Activated B cell treated with CpG ODN at 0.5 μM for 24 hours (primary cell): ENCODE measurements at regions of chr6 and their contacts with region 1.

Region 1: GRCh38 chr6:16761471-16762267 is 409 bp upstream of the ATXN1 start:
- DNase-seq: peak; percentile 72
- ATAC-seq: peak; percentile 59
- H3K4me3 Mint-ChIP-seq: peak overlapping the region; percentile 95
- H3K27ac Mint-ChIP-seq: peak overlapping the region; percentile 92
- H3K4me1 Mint-ChIP-seq: peaks cover 38% of the 10 kb centered on the region
- H3K27me3 Mint-ChIP-seq: no peaks in the 10 kb centered on the region
- CTCF ChIP-seq: no peak

Region 2: DNA sequence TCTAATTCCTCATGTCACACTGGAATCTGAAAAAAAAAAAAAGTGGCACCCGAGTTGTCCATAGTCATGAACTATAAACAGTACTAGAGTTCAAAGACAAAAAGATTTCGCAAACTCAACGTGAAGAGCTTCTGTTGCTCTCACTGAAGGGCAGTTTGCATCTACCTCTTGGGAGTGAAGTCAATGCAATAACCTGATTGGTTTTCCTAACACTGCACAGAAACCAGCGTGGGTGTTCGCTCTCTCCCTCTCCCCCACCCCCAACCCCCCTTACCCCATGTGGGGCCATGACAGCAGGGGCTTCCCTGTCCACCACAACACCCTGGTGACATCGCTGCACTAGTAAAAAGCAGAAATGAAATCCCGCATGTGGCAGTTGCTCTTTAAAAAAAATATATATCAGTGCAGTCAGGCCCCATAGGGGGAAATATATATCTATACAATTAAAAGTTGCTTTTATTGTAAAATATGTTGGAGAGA is 456.4 kb before region 1 on chr6:
- CTCF ChIA-PET with region 1: interaction called, 3 read pairs
- POLR2A ChIA-PET with region 1: interaction called, 6 read pairs
- intact Hi-C with region 1: loop called (anchors 1 kb)
- DNase-seq: peak; percentile 37
- ATAC-seq: peak; percentile 96
- H3K4me3 Mint-ChIP-seq: peak overlapping the region; percentile 82
- H3K27ac Mint-ChIP-seq: peak overlapping the region; percentile 65
- H3K4me1 Mint-ChIP-seq: peaks cover 36% of the 10 kb centered on the region
- H3K27me3 Mint-ChIP-seq: no peaks in the 10 kb centered on the region
- CTCF ChIP-seq: no peak

Region 3: DNA sequence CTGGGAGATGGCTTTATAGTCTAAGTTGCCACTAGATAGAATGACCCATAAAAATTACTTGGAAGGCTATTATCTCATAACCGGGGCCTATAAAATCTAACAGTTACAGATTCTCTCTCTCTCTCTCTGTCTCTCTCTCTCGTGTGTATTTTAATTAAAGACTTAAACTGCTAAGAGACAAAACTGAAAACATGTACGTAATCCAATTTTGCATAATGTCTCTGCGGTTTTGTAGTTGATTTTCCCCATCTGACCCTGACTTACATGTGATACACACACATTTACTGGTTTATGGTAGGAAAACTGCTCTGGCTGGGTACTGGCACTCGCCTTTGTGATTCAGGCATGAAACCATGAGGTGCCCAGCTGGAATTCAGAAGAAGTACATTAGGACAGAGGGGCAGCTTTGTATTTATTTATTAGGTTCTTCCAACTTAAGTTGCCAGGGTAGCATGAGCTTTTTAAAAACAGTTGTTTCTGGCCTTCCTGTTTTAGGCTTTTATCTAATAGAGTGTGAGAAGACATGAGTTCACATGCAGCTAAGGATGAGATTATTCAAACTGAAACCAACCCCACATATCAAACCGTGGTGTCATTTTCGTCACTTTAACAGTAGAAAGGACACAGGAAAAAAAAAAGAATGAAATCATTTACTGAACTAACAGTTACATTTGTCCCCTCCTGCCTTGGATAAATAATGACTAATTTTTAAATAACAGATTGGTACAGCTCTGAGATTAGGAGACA is 340.8 kb before region 1 on chr6:
- CTCF ChIA-PET with region 1: interaction called, 20 read pairs
- POLR2A ChIA-PET with region 1: interaction called, 27 read pairs
- intact Hi-C with region 1: loop called (anchors 1 kb)
- DNase-seq: peak; percentile 27
- ATAC-seq: peak; percentile 66
- H3K4me3 Mint-ChIP-seq: peak overlapping the region; percentile 62
- H3K27ac Mint-ChIP-seq: peak overlapping the region; percentile 98
- H3K4me1 Mint-ChIP-seq: peaks cover 47% of the 10 kb centered on the region
- H3K27me3 Mint-ChIP-seq: no peaks in the 10 kb centered on the region
- CTCF ChIP-seq: no peak

Region 4: GRCh38 chr6:16514249-16514648 is 247.4 kb before region 1 on chr6:
- CTCF ChIA-PET with region 1: interaction called, 174 read pairs
- POLR2A ChIA-PET with region 1: interaction called, 18 read pairs
- intact Hi-C with region 1: loop called (anchors 1 kb)
- DNase-seq: no peak
- ATAC-seq: peak; percentile 56
- H3K4me3 Mint-ChIP-seq: no peak overlapping the region
- H3K27ac Mint-ChIP-seq: peak overlapping the region; percentile 14
- H3K4me1 Mint-ChIP-seq: peaks cover 46% of the 10 kb centered on the region
- H3K27me3 Mint-ChIP-seq: no peaks in the 10 kb centered on the region
- CTCF ChIP-seq: no peak

Region 5: DNA sequence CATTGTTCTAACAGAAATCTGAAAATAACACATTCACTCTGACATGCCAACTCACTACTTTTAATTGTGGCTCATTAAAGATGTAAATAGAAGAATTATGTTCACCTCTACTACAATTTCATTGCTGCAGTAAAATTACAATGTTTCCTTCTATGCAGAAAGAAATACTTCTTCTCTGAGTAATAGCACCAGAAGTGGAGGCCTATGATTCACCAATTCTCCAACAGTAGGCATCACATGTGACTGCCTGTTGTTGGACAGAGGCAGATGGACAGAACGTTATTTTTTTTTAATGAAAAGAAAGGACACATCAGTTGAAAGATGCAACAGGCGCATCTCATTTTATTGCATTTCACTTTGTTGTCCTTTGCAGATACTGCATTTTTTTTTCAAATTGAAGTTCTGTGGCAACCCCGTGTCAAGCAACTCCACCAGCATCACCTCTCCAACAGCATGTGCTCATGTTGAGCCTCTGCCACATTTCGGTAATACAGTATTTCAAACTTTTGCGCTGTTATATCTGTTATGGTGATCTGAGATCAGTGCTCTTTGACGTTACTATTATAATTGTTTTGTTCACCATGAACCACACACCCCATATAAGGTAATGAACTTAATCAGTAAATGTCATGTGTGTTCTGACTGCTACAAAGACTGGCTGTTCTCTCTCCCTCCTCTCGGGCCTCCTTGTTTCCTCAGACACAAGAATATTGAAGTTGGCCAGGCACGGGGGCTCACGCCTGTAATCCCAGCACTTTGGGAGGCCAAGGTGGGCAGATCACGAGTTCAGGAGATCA is 121.8 kb before region 1 on chr6:
- CTCF ChIA-PET with region 1: no interaction called
- POLR2A ChIA-PET with region 1: interaction called, 9 read pairs
- intact Hi-C with region 1: loop called (anchors 1 kb)
- DNase-seq: no peak
- ATAC-seq: no peak
- H3K4me3 Mint-ChIP-seq: peak overlapping the region; percentile 38
- H3K27ac Mint-ChIP-seq: peak overlapping the region; percentile 30
- H3K4me1 Mint-ChIP-seq: peaks cover 16% of the 10 kb centered on the region
- H3K27me3 Mint-ChIP-seq: no peaks in the 10 kb centered on the region
- CTCF ChIP-seq: no peak

Region 6: DNA sequence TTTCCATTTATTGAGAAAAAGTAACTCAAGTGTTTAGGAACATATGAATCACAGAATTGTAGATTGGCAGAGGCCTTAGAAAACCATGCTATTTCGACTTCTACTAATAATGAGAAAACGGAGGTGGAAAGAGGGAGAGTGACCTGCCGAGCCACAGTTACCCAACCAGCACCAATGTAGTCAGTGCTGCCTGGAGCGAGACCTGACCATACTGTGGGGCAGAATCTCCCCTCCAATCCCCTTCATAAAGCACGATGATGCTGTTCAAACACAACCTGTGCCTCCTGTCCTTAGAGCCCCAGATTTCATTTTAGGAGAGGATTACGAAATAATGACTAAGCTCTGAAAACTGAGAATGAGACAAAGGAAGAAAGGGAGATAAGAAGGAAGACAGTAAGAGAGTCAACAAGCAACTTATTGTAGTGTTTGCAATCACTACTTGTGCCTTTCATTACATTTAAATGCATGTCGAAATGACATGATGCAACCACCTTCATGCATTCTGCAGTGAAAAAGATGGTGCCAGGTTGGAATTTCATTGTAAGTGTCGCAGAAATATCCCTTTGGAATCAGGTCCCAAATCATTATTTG is 71.0 kb before region 1 on chr6:
- CTCF ChIA-PET with region 1: interaction called, 12 read pairs
- POLR2A ChIA-PET with region 1: interaction called, 10 read pairs
- intact Hi-C with region 1: loop called (anchors 1 kb)
- DNase-seq: no peak
- ATAC-seq: peak; percentile 79
- H3K4me3 Mint-ChIP-seq: peak overlapping the region; percentile 15
- H3K27ac Mint-ChIP-seq: peak overlapping the region; percentile 78
- H3K4me1 Mint-ChIP-seq: peaks cover 60% of the 10 kb centered on the region
- H3K27me3 Mint-ChIP-seq: no peaks in the 10 kb centered on the region
- CTCF ChIP-seq: no peak

Region 7: GRCh38 chr6:17706580-17707370 is 945.1 kb after region 1 on chr6 and contains the start of gene NUP153:
- CTCF ChIA-PET with region 1: no interaction called
- POLR2A ChIA-PET with region 1: interaction called, 3 read pairs
- intact Hi-C with region 1: loop called (anchors 10 kb)
- DNase-seq: peak; percentile 100
- ATAC-seq: peak; percentile 67
- H3K4me3 Mint-ChIP-seq: peak within 1 kb of the TSS; percentile 89
- H3K27ac Mint-ChIP-seq: peak within 1 kb of the TSS; percentile 95
- H3K4me1 Mint-ChIP-seq: peaks cover 44% of the 10 kb centered on the region
- H3K27me3 Mint-ChIP-seq: no peaks in the 10 kb centered on the region
- CTCF ChIP-seq: no peak
- total RNA-seq, gene NUP153: 59.2 and 63.8 TPM in 2 replicates